ENCODE measurements at regions of chr11 and their contacts with region 1.

Region 1: GRCh38 chr11:33716236-33716635 is 15.6 kb upstream of the C11orf91 start:
- DNase-seq: no peak
- H3K4me3 Mint-ChIP-seq: no peak overlapping the region
- H3K27ac Mint-ChIP-seq: no peak overlapping the region
- H3K4me1 Mint-ChIP-seq: no peaks in the 10 kb centered on the region
- H3K27me3 Mint-ChIP-seq: no peaks in the 10 kb centered on the region

Region 2: DNA sequence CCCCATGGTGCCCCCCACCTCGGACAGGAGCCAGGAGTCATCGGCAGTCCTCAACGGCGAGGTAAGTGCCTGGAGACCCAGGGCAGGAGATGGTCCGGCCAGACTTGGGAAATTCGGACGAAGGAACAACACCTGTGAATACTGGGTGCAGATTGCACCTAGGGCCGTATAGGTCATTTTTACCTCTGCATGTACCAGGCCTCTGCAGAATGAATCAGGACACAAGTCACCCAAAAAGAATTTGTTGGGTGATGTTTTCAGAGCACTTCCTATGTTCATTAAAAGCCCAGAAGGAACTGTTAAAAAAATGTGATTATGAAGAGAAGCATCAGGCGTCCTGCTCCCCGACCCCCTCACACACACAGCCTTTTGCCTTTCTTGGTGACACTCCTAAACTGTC is 109.5 kb before region 1 on chr11:
- CTCF ChIA-PET with region 1: no interaction called
- DNase-seq: no peak
- H3K4me3 Mint-ChIP-seq: no peak overlapping the region
- H3K27ac Mint-ChIP-seq: no peak overlapping the region
- H3K4me1 Mint-ChIP-seq: no peaks in the 10 kb centered on the region
- H3K27me3 Mint-ChIP-seq: peaks cover 9% of the 10 kb centered on the region

Region 3: GRCh38 chr11:33736148-33736809 is 20.0 kb after region 1 on chr11 and contains the start of gene CD59:
- CTCF ChIA-PET with region 1: interaction called, 31 read pairs
- DNase-seq: peak; percentile 92
- H3K4me3 Mint-ChIP-seq: peak within 1 kb of the TSS; percentile 82
- H3K27ac Mint-ChIP-seq: peak within 1 kb of the TSS; percentile 81
- H3K4me1 Mint-ChIP-seq: peaks cover 30% of the 10 kb centered on the region
- H3K27me3 Mint-ChIP-seq: peaks cover 16% of the 10 kb centered on the region

Region 4: GRCh38 chr11:33742249-33742851 is 26.1 kb after region 1 on chr11:
- CTCF ChIA-PET with region 1: interaction called, 31 read pairs
- DNase-seq: no peak
- H3K4me3 Mint-ChIP-seq: no peak overlapping the region
- H3K27ac Mint-ChIP-seq: no peak overlapping the region
- H3K4me1 Mint-ChIP-seq: no peaks in the 10 kb centered on the region
- H3K27me3 Mint-ChIP-seq: peaks cover 6% of the 10 kb centered on the region

Region 5: DNA sequence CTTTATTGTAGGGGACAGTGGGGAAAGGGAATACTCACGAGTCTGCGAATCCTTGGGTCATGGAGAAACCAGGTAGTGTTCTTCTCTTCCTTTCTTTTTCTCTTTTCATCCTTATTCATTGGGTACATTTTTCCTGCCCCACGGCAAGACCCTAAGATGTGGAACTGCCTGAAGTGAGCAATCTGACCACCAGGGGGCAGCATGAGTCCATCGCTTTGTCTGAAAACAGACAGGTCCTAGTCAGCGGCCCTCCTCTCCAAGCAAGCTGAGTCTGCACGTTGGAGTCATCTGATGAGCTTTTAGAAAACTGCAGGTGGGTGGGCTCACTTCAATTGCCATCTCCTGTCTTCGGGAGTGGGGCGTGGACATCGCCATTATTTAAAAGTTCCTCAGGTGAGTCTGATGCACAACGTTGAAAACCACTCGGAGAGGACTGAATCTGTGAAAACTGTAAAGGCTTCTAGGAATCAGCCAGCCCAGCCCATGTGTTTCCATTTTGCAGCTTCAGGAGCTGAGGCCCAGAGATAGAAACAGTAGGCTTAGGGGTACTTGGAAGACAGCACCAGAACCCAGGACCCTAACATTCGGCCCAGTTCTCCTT is 92.1 kb after region 1 on chr11:
- CTCF ChIA-PET with region 1: interaction called, 14 read pairs
- DNase-seq: peak; percentile 89
- H3K4me3 Mint-ChIP-seq: no peak overlapping the region
- H3K27ac Mint-ChIP-seq: no peak overlapping the region
- H3K4me1 Mint-ChIP-seq: no peaks in the 10 kb centered on the region
- H3K27me3 Mint-ChIP-seq: peaks cover 47% of the 10 kb centered on the region

Region 6: DNA sequence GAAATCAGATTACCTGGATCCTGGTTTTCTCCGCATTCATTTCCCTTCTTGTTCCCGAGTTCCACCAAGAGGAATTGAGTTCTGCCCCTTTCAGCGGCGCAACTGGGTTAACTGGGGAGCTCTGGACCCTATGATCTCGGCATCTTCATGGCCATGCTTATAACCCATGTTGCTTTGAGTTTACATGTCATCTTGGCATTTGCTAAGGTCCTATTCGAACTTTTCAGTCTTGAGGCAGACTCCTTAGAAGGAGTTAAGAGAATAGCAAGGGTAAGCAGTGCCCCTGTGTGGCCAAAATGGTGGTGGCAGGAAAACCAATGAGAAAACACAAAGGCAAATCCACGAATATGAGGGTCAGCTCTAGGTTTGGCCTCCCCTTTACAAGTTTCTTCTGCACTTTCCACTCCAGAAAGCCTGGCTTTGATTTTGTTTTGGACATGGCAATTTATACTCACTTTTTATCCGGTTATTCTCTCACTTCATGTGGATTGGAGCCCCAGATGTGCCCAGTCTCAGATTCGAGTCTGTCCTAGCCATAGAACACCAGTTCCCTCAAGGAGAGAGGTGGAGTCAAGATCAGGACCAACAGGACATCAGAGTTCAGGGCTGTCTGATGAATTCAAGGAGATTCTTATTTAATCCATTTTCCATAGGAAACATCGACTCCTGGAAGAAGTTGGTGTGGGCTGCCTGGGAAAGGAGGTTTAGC is 113.4 kb after region 1 on chr11:
- CTCF ChIA-PET with region 1: interaction called, 13 read pairs
- DNase-seq: peak; percentile 71
- H3K4me3 Mint-ChIP-seq: peak overlapping the region; percentile 52
- H3K27ac Mint-ChIP-seq: no peak overlapping the region
- H3K4me1 Mint-ChIP-seq: peaks cover 3% of the 10 kb centered on the region
- H3K27me3 Mint-ChIP-seq: peaks cover 69% of the 10 kb centered on the region